ENCODE measurements at regions of chr17 and their contacts with region 1.

Region 1: DNA sequence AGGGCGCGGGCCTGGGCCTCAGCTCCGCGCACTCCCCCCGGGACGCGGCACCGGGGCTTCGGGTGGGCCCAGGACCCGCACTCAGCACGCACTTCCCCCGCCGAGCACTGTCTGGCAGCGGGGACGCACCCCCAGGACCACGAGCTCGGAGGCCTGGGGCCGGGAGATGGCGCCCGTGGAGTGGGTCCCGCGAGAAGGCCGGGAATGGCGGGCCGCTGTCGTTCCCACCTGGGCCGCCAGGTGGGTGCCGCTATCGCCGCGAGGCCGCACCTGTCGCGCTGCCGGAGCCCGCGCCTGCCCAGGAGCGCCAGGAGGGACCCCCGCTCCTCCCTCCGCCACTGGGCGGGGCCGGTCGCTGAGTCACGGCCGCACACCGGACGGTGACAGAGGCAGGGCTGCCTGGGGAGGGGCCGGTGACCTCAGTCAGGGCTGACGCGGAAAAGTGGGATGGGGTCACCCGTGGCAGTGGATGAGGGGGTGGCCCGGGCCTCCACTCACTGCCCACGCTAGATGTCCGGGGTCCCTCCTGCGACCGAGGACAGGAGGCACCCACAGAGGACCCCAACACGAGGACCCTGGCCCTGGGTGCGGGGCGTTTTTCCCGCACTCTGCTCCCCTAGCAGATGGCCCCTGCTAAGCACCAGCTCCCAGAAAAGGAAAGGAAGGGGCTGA is 6.8 kb upstream of the ACTG1 start:
- DNase-seq: peak; percentile 61 to 66
- ATAC-seq: peak; percentile 42 to 48
- H3K4me3 ChIP-seq: peak overlapping the region; percentile 66
- H3K27ac ChIP-seq: peak overlapping the region; percentile 89 to 99
- H3K4me1 ChIP-seq: peaks cover 43% of the 10 kb centered on the region
- CTCF ChIP-seq: peak; percentile 62
- EP300 ChIP-seq: no peak; a peak in 1 of 5 replicates
- POLR2A ChIP-seq: peak; percentile 3
- RAD21 ChIP-seq: peak; percentile 47 to 67; a peak in 4 of 5 replicates

Region 2: GRCh38 chr17:81543339-81543675 is 23.9 kb after region 1 on chr17:
- CTCF ChIA-PET with region 1: interaction called, 12 read pairs
- POLR2A ChIA-PET with region 1: interaction called, 3 read pairs
- DNase-seq: no peak
- ATAC-seq: no peak
- H3K4me3 ChIP-seq: no peak overlapping the region
- H3K27ac ChIP-seq: peak overlapping the region in 1 of 2 experiments; percentile 13; a peak in 1 of 6 replicates
- H3K4me1 ChIP-seq: no peaks in the 10 kb centered on the region
- CTCF ChIP-seq: no peak
- EP300 ChIP-seq: no peak
- POLR2A ChIP-seq: no peak
- RAD21 ChIP-seq: no peak

Region 3: DNA sequence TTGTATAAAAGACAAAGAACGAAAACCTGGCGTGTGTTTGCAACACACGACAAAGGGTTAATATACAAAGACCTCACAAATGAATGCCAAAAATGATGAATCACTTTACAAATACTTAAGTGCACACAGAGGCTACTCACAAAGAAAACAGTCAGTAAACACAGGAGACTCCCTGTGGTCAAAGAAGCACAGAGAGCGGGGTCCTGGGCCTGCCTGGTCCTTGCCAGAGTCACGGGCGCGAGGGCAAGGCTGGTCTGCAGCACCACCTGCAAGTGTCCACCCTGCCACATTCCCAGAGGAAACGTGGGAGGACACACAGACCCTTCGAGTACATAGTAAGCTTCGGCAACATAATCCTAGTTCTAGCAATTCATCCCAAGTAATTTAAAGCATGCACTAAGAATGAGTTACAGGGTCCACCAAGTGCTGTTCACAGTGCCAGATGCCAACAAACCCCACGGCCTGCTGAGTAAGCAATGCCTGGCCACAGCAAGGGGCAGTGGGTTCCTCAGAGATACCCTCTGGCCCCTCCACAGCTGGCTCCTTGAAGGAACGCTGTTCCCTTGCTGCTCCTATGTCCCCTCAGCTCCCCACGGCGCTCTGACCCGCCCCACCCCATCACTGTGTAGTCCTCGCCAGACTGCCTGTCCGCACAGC is 57.3 kb after region 1 on chr17:
- CTCF ChIA-PET with region 1: interaction called, 11 read pairs
- POLR2A ChIA-PET with region 1: no interaction called
- DNase-seq: peak; percentile 89 to 99
- ATAC-seq: peak; percentile 86 to 91
- H3K4me3 ChIP-seq: peak overlapping the region; percentile 21; the same call in 2 of the 3 replicates
- H3K27ac ChIP-seq: peak overlapping the region; percentile 93 to 95
- H3K4me1 ChIP-seq: peaks cover 76% of the 10 kb centered on the region
- CTCF ChIP-seq: 0 out of 3 replicates have a peak, but pooled peaks have one; percentile 13
- EP300 ChIP-seq: peak in 1 of 2 experiments; percentile 67; a peak in 2 of 5 replicates
- POLR2A ChIP-seq: no peak
- RAD21 ChIP-seq: peak; percentile 43 to 57; a peak in 4 of 5 replicates

Region 4: GRCh38 chr17:81821603-81822311 is 302.3 kb after region 1 on chr17:
- CTCF ChIA-PET with region 1: no interaction called
- POLR2A ChIA-PET with region 1: no interaction called
- DNase-seq: peak; percentile 85 to 93
- ATAC-seq: peak; percentile 61 to 90
- H3K4me3 ChIP-seq: no peak overlapping the region
- H3K27ac ChIP-seq: peak overlapping the region; percentile 54 to 81
- H3K4me1 ChIP-seq: peaks cover 24% of the 10 kb centered on the region
- CTCF ChIP-seq: peak; percentile 63
- EP300 ChIP-seq: no peak
- POLR2A ChIP-seq: no peak
- RAD21 ChIP-seq: peak; percentile 31 to 59; a peak in 2 of 5 replicates